Lower lobe of right lung (tissue), 2 donors: ENCODE measurements at regions of chr2 and their contacts with region 1.

Region 1: DNA sequence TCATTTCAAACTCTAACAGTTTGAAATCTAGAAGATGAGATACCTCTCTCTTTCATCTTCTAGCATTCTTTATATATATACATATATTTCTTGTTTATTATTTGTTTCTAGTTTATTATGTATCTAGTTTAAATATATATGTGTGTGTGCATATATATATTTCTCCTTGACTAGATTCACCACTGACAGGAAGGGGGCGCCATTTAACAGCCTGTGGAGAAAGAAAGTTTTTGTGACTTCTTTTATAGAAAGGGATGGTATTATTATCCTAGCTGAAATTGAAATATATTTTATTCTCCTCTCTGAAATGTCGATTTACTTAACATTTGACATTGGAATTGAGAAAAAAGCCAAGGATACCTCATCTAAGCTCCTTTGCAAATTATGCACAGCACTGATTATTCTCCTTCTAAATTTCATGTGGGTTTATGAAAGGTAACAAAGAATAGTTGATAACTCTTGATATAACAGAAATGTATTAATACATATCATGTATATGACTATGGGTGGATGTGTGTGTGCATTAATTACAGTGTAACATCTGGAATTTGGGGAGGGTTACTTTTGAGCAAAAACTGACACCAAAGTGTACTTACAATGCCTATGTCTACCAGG is 160.7 kb upstream of the NT5C1B start:
- DNase-seq: no peak
- ATAC-seq: no peak
- H3K4me3 ChIP-seq: no peak overlapping the region
- H3K27ac ChIP-seq: no peak overlapping the region
- H3K4me1 ChIP-seq: no peaks in the 10 kb centered on the region
- H3K27me3 ChIP-seq: no peaks in the 10 kb centered on the region
- CTCF ChIP-seq: peak; percentile 71

Region 2: GRCh38 chr2:18455236-18455862 is 294.7 kb before region 1 on chr2:
- intact Hi-C with region 1: no loop called
- DNase-seq: no peak
- ATAC-seq: peak; percentile 34 to 55
- H3K4me3 ChIP-seq: no peak overlapping the region
- H3K27ac ChIP-seq: no peak overlapping the region
- H3K4me1 ChIP-seq: peaks cover 6% of the 10 kb centered on the region
- H3K27me3 ChIP-seq: no peaks in the 10 kb centered on the region
- CTCF ChIP-seq: no peak

Region 3: DNA sequence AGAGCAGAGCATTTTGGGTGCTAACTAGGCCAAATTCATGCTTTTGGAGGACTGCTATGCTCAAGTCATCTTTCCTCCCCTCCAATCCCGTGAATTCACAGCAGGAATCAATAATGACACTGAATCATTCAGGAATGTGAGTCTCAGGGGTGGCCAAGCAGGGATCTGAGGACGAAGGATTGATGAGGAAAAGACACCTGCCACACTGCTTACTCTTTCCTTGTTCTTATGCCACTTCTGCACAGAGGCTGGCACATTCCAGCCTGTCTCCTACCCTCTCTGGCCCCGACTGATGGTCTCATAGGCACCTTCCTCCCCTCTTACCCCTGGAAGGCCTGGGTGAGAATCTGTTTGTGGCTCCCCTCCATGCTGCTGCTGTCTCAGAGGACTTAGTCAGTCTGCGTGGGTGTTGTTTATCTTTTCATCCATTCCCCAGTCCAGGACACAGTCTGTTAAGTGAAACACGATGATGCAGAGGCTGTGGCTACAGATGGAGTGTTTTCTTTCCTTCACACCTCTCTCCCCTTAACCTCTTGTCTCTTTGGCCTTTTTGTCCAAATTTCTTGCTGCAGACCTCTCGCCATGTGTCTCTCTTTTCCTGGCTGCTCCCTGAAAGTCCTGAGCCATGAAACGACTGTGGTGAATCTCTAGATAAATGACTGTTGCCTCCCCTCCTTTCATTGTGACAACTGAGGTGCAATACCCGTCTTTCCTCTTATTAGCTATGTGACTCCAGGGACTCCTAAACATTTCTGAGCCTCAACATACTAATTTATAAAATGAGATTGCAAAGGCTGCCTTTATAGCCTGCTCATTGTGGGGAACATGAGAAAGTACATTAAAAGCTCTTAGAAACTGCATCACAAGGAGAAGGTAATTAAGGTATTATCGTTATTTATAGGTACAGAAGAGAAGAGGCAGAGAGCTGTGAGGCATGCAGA is 276.5 kb before region 1 on chr2:
- intact Hi-C with region 1: no loop called
- DNase-seq: no peak
- ATAC-seq: peak; percentile 76 to 77
- H3K4me3 ChIP-seq: no peak overlapping the region
- H3K27ac ChIP-seq: no peak overlapping the region
- H3K4me1 ChIP-seq: peaks cover 12% of the 10 kb centered on the region
- H3K27me3 ChIP-seq: no peaks in the 10 kb centered on the region
- CTCF ChIP-seq: no peak

Region 4: DNA sequence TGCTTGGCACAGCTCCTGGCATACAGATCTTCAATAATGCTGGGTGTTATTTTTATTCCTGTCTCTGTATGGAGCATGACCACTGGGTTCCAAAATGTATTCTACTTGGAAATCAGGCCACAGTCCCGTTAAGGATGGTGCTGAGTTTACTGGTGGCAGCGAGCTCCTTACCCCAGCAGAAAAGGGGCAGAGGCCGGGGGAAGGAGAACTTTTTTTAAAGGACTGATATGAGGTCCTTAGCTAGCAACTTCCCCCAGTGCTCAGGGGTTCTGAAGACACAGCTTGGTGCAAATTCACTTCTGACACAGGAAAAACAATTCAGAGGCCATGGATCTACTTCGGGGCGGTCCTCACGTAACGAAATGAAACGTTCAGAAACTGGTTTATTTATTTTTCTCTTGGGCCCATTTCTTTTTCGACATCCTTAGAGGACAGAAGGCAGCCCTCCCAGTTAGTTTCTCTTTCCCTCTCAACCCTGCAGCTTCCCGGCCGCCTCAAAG is 190.4 kb before region 1 on chr2:
- intact Hi-C with region 1: loop called (anchors 10 kb)
- DNase-seq: no peak
- ATAC-seq: no peak
- H3K4me3 ChIP-seq: peak overlapping the region; percentile 80
- H3K27ac ChIP-seq: peak overlapping the region; percentile 98
- H3K4me1 ChIP-seq: peaks cover 23% of the 10 kb centered on the region
- H3K27me3 ChIP-seq: no peaks in the 10 kb centered on the region
- CTCF ChIP-seq: no peak

Region 5: GRCh38 chr2:18599509-18600254 is 150.3 kb before region 1 on chr2:
- intact Hi-C with region 1: no loop called
- DNase-seq: no peak
- ATAC-seq: no peak
- H3K4me3 ChIP-seq: no peak overlapping the region
- H3K27ac ChIP-seq: no peak overlapping the region
- H3K4me1 ChIP-seq: no peaks in the 10 kb centered on the region
- H3K27me3 ChIP-seq: no peaks in the 10 kb centered on the region
- CTCF ChIP-seq: no peak

Region 6: GRCh38 chr2:19362755-19363473 is 612.9 kb after region 1 on chr2:
- intact Hi-C with region 1: loop called (anchors 10 kb)
- DNase-seq: peak; percentile 78
- ATAC-seq: peak; percentile 65 to 79
- H3K4me3 ChIP-seq: peak overlapping the region; percentile 71
- H3K27ac ChIP-seq: peak overlapping the region; percentile 53
- H3K4me1 ChIP-seq: peaks cover 16% of the 10 kb centered on the region
- H3K27me3 ChIP-seq: peaks cover 38% of the 10 kb centered on the region
- CTCF ChIP-seq: peak; percentile 85

Region 7: DNA sequence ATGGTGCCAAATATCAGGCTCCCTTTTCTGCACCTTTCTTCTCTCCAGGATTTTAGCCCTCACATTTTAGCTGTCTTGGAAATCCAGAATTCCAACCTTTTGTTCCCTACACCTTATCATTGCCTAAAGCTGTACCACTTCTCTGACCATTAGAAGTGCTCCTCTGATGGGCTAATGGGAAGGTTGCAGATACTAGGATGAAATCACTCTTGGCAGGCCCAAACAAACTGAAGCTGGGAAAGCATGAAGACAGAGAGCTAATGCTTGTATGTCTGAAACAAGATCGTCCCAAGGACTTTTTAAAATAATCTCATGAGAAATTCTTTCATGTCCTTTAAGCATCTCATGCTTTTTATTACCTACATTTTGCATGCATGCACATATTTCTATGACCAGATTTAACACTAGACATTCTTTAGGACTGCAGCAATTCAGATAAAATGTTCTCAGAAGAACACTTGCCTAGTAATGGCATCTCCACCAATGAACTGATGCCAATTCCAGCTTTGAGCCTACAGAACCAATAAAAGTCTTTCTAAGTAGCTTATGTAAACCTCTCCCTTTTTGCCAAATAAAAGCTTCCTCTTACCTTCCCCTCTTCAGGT is 706.8 kb after region 1 on chr2:
- intact Hi-C with region 1: no loop called
- DNase-seq: no peak
- ATAC-seq: no peak
- H3K4me3 ChIP-seq: no peak overlapping the region
- H3K27ac ChIP-seq: no peak overlapping the region
- H3K4me1 ChIP-seq: no peaks in the 10 kb centered on the region
- H3K27me3 ChIP-seq: no peaks in the 10 kb centered on the region
- CTCF ChIP-seq: no peak